ENCODE measurements at regions of chr4 and their contacts with region 1.

Region 1: GRCh38 chr4:77385124-77385969 is 220.3 kb upstream of the CXCL13 start:
- DNase-seq: peak; percentile 14 to 50
- ATAC-seq: peak; percentile 61 to 77 (median 74)
- H3K4me3 ChIP-seq: no peak overlapping the region
- H3K27ac ChIP-seq: no peak overlapping the region
- H3K4me1 ChIP-seq: no peaks in the 10 kb centered on the region
- H3K27me3 ChIP-seq: no peaks in the 10 kb centered on the region
- CTCF ChIP-seq: peak; percentile 66 to 85 (median 83)

Region 2: GRCh38 chr4:77007358-77008191 is 377.8 kb before region 1 on chr4:
- intact Hi-C with region 1: no loop called
- DNase-seq: no peak
- ATAC-seq: peak; percentile 57 to 84 (median 76)
- H3K4me3 ChIP-seq: no peak overlapping the region
- H3K27ac ChIP-seq: peak overlapping the region in 5 of 10 donors; percentile 23 to 63 (median 34)
- H3K4me1 ChIP-seq: peaks cover 10 to 75% (median 44%) of the 10 kb centered on the region in 9 donors
- H3K27me3 ChIP-seq: no peaks in the 10 kb centered on the region
- CTCF ChIP-seq: no peak

Region 3: DNA sequence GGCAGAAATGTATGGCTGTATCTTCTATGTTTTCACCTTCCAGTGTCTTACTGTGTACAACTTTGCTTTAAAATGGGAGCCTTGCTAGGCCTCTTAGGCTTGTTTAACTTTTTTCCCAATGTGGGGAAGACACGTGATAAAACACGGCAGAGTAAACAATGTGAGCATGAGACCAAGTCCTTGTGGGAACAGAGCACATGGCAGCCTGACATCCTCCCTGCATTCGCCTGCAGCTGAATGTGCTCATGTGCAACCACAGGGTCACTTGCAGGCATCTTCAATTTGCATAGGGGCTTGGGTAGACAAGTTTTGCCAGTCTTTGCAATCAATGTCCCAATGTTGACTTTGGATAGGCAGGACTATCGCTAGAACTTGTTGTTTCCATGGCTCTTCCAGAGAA is 136.5 kb before region 1 on chr4:
- intact Hi-C with region 1: no loop called
- DNase-seq: no peak
- ATAC-seq: no peak
- H3K4me3 ChIP-seq: no peak overlapping the region
- H3K27ac ChIP-seq: no peak overlapping the region
- H3K4me1 ChIP-seq: no peaks in the 10 kb centered on the region
- H3K27me3 ChIP-seq: peaks cover 0 to 5% (median 0%) of the 10 kb centered on the region in 7 donors
- CTCF ChIP-seq: no peak

Region 4: DNA sequence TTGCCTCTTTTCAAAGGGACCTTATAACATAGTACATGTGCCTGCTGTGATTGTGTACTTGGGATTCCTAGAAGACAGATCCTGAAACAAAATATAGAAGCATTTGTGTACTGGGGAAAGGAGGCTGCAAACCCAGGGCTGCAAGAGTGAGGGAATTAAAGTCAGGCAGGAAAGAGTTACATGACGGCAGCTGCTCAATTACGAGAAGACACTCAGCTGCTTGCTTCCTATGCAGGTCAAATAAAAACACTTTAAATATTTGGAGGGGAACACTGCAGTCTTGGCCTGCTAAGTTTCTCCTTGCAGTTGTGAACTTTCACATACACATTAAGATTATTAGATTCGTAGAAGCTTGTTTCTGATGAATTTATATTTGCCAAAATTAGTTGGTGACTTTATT is 28.4 kb after region 1 on chr4:
- intact Hi-C with region 1: no loop called
- DNase-seq: no peak
- ATAC-seq: no peak
- H3K4me3 ChIP-seq: no peak overlapping the region
- H3K27ac ChIP-seq: no peak overlapping the region
- H3K4me1 ChIP-seq: no peaks in the 10 kb centered on the region
- H3K27me3 ChIP-seq: peaks cover 0 to 8% (median 0%) of the 10 kb centered on the region in 7 donors
- CTCF ChIP-seq: no peak

Region 5: GRCh38 chr4:77433418-77433733 is 48.0 kb after region 1 on chr4:
- intact Hi-C with region 1: loop called (anchors 1 to 5 kb)
- DNase-seq: peak in 1 of 2 donors; percentile 23
- ATAC-seq: peak; percentile 70 to 89 (median 74)
- H3K4me3 ChIP-seq: peak overlapping the region in 1 of 10 donors; percentile 14
- H3K27ac ChIP-seq: peak overlapping the region in 1 of 10 donors; percentile 52
- H3K4me1 ChIP-seq: peaks cover 0 to 23% (median 9%) of the 10 kb centered on the region in 9 donors
- H3K27me3 ChIP-seq: no peaks in the 10 kb centered on the region
- CTCF ChIP-seq: peak; percentile 28 to 78 (median 62)

Region 6: DNA sequence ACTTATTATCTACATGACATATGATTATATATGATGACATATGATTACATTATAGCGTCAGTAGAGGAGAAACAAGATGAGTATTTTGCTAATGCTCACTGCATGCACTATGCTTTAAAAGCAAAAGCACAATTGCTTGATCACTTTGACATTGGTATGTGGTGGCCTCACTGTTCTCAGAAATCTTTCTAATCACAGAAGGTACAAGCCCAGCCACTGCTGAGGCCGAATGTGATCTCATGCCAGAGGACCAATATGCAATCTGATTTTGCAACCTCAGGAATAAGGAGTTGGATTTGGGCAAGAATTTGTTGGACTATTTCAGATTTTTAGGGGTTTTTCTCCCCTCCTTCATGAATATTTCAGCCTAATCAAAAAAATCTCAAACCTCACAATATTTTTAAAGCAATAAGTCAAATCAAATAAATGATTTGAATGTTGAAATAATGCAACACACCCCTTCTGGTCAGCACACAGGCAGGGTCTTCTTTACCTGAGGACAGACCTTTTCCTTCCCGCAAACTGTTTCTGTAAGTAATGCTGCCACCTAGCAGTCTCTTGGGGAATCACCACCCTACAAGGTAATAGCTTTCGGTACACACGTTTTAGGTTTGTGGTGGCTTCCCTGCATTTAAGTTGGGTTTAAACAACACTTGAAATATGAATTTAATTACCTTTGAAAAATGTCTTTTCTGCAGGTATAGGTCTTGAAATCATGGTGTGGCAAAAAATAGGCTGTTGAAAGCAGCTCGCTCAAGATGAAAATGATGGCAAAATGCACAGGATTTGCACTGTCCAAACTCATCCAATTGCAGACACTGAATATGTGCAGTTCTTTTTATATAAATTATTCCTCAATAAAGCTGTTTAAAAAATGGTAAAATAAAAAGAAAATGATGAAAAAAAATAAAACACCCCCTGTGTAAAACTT is 215.4 kb after region 1 on chr4:
- intact Hi-C with region 1: loop called (anchors 1 to 10 kb)
- DNase-seq: no peak
- ATAC-seq: no peak
- H3K4me3 ChIP-seq: no peak overlapping the region
- H3K27ac ChIP-seq: no peak overlapping the region
- H3K4me1 ChIP-seq: no peaks in the 10 kb centered on the region
- H3K27me3 ChIP-seq: no peaks in the 10 kb centered on the region
- CTCF ChIP-seq: peak; percentile 43 to 87 (median 76)

Region 7: DNA sequence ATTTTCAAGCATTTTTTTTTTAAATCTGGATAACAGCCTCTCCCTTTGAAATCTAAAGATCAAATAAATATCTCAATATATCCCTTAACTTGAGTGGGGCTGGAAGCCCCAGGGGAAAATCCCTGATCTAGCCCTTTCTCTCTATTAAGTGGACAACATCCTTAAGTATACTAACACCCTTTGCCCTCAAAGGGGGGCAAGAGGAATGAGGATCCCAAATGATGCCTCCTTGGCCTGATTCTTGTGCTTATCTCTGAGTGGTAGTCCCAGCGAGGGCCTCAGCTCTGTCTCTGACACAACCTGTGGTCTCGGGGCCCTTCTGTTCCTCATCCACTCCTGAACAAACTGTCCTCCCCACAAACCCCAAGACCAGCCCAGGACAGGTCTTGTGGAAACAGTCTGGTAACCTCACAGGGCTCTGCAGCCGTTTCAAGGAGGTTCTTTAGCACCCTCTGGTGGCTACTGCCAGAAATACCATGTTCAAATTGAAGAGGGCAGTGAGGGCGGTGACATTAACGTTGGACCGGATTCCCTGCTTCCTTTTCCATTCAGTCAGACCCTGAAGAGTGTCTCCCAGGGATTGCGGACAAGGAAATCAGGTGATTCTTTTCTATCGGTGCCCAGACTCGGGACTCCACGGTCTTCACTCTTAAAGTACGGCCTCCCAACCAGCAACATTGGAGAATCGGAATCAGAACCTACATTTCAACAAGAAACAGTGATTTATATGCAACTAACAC is 233.2 kb after region 1 on chr4:
- intact Hi-C with region 1: loop called in 5 of 10 experiments (anchors 1 to 5 kb)
- DNase-seq: peak in 1 of 2 donors; percentile 82
- ATAC-seq: peak; percentile 85 to 96 (median 92)
- H3K4me3 ChIP-seq: peak overlapping the region in 3 of 10 donors; percentile 4 to 23 (median 10)
- H3K27ac ChIP-seq: no peak overlapping the region
- H3K4me1 ChIP-seq: peaks cover 0 to 11% (median 4%) of the 10 kb centered on the region in 9 donors
- H3K27me3 ChIP-seq: no peaks in the 10 kb centered on the region
- CTCF ChIP-seq: peak; percentile 54 to 89 (median 85)

Measured in heart right ventricle (tissue), 16 donors.